ENCODE measurements at regions of chr3 and their contacts with region 1.

Region 1: DNA sequence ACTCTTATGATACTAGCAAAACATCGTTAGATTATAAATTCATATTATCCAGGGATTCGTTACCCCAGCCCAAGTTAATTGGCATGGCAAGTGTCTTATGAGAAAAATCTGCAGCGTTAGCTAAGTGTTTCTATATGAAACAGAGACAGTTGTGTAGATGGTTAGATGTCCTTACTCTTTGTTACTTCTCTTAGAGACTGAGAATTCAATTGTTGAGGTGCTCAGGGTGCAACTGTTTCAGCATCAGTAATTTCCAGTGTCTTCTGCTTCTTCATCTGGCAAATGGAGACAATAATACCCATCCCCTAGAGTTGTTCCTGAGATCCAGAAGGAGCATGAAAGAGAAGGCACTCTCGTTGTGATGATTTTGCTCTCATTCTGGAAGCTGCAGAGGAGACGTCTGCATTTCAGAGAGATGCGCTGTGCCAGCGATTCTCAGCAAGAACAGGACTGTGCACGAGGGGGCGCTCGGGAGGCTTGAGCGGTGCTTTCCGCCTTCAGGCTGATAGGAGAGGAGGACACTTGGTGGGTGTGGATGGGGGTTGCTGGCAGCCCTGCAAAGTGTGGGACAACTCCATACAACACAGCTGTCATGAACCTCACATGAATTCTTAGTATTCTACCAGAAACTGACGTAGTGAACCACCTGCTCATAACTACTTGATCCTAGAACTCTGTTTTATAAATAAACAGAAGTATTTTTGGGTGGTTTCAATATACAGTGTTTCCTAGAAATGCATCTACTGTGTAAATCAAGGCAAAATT is 39.7 kb upstream of the SPSB4 start:
- DNase-seq: peak; percentile 48 to 85 (median 73)
- ATAC-seq: peak; percentile 99
- H3K4me3 ChIP-seq: no peak overlapping the region
- H3K4me3 Mint-ChIP-seq: no peak overlapping the region
- H3K27ac ChIP-seq: no peak overlapping the region
- H3K27ac Mint-ChIP-seq: no peak overlapping the region
- H3K4me1 ChIP-seq: peaks cover 5% of the 10 kb centered on the region
- H3K4me1 Mint-ChIP-seq: peaks cover 5% of the 10 kb centered on the region
- H3K27me3 ChIP-seq: peaks cover 0 to 6% of the 10 kb centered on the region in 2 experiments
- H3K27me3 Mint-ChIP-seq: peaks cover 22% of the 10 kb centered on the region
- CTCF ChIP-seq: peak; percentile 71

Region 2: GRCh38 chr3:141000027-141000663 is 11.3 kb before region 1 on chr3:
- CTCF ChIA-PET with region 1: interaction called, 28 read pairs
- POLR2A ChIA-PET with region 1: no interaction called
- intact Hi-C with region 1: no loop called
- DNase-seq: peak in 8 of 9 experiments; percentile 3 to 72 (median 48)
- ATAC-seq: peak; percentile 87
- H3K4me3 ChIP-seq: no peak overlapping the region
- H3K4me3 Mint-ChIP-seq: no peak overlapping the region
- H3K27ac ChIP-seq: no peak overlapping the region
- H3K27ac Mint-ChIP-seq: no peak overlapping the region
- H3K4me1 ChIP-seq: no peaks in the 10 kb centered on the region
- H3K4me1 Mint-ChIP-seq: no peaks in the 10 kb centered on the region
- H3K27me3 ChIP-seq: no peaks in the 10 kb centered on the region
- H3K27me3 Mint-ChIP-seq: no peaks in the 10 kb centered on the region
- CTCF ChIP-seq: peak; percentile 39